ENCODE measurements at regions of chrX and their contacts with region 1.

Region 1: GRCh38 chrX:74382613-74383012 is 38.7 kb upstream of the SLC16A2 start:
- DNase-seq: peak; percentile 62
- H3K4me3 ChIP-seq: no peak overlapping the region
- H3K27ac ChIP-seq: no peak overlapping the region
- H3K4me1 ChIP-seq: no peaks in the 10 kb centered on the region
- H3K27me3 ChIP-seq: peaks cover 2% of the 10 kb centered on the region
- CTCF ChIP-seq: peak; percentile 85 to 97

Region 2: DNA sequence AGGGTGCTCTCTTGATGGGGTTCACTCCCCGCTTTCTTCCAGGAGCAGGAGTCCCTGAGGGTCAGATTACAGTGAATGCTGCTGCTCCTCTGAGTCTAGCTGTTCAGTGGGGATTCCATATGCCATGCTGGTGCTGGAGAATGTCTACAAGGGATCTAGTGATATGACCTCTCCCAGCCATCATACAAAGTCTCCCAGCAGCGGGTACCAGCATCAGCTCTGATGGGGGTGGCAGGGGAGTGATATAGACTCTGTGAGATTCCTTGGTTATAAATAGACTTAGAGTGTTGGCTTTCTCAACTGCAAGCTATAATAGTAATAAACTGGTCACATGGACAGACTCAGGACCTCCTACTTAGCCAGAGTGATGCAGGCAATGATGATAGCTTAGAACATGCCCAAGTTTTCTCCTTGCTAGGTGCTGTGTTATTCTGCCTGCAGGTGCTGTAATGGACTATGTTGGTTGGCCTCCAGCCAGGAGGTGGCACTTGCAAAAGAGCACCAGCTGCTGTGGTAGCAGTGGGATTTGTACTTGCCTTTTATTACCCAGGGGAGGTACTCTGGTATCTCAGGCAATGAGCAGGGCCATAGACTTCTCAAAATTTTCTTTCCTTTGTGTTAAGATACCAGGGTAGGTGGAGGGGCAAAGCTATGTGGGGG is 616.7 kb before region 1 on chrX:
- CTCF ChIA-PET with region 1: no interaction called
- dilution Hi-C with region 1: no loop called
- in situ Hi-C with region 1: no loop called
- intact Hi-C with region 1: no loop called
- DNase-seq: no peak
- H3K4me3 ChIP-seq: no peak overlapping the region
- H3K27ac ChIP-seq: no peak overlapping the region
- H3K4me1 ChIP-seq: no peaks in the 10 kb centered on the region
- H3K27me3 ChIP-seq: peaks cover 2% of the 10 kb centered on the region
- CTCF ChIP-seq: no peak

Region 3: GRCh38 chrX:73855546-73855945 is 527.1 kb before region 1 on chrX:
- CTCF ChIA-PET with region 1: no interaction called
- dilution Hi-C with region 1: no loop called
- in situ Hi-C with region 1: no loop called
- intact Hi-C with region 1: loop called (anchors 1 kb)
- DNase-seq: peak; percentile 60
- H3K4me3 ChIP-seq: no peak overlapping the region
- H3K27ac ChIP-seq: no peak overlapping the region
- H3K4me1 ChIP-seq: no peaks in the 10 kb centered on the region
- H3K27me3 ChIP-seq: no peaks in the 10 kb centered on the region
- CTCF ChIP-seq: peak; percentile 85 to 88

Region 4: DNA sequence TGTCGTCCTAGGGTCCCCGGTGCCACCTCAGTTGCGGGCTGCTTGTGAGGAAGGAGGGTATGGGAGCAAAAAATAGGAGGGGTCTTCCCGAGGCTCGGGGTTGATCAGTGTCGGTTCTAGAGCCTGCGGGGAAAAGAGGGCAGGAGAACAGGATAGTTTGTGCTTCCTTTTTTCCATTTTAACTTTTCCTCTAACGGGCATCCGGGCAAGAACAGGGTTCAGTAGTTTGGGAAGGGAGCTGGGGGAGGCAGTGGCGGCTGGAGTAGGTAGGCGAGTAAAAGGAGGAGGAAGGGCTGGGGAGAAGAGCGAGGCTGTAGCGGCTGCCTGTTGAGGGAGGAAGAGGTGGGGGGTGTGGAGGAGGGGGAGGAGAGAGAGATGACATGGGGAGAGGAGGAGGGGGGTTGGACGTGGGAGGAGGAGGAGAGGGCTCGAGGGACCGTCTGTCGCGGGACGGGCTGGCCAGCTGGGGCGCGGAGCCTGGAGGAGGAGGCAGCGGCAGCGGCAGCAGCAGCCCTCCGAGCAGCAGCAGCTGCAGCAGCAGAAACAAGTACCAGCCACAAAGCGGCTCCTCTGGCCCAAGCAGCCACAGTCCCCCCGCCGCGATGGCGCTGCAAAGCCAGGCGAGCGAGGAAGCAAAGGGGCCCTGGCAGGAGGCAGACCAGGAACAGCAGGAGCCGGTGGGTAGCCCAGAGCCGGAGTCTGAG is 38.6 kb after region 1 on chrX and contains the start of gene SLC16A2:
- CTCF ChIA-PET with region 1: no interaction called
- dilution Hi-C with region 1: no loop called
- in situ Hi-C with region 1: no loop called
- intact Hi-C with region 1: loop called (anchors 1 kb)
- DNase-seq: peak; percentile 64
- H3K4me3 ChIP-seq: peak within 1 kb of the TSS; percentile 52 to 63 (median 63)
- H3K27ac ChIP-seq: peak within 1 kb of the TSS; percentile 18
- H3K4me1 ChIP-seq: no peaks in the 10 kb centered on the region
- H3K27me3 ChIP-seq: no peaks in the 10 kb centered on the region
- CTCF ChIP-seq: no peak
- total RNA-seq, gene SLC16A2: 16.2 to 45.4 TPM

Region 5: GRCh38 chrX:74450803-74451449 is 68.3 kb after region 1 on chrX:
- CTCF ChIA-PET with region 1: no interaction called
- dilution Hi-C with region 1: no loop called
- in situ Hi-C with region 1: loop called in 1 of 2 experiments (anchors 10 kb)
- intact Hi-C with region 1: loop called (anchors 2 kb)
- DNase-seq: peak; percentile 90
- H3K4me3 ChIP-seq: no peak overlapping the region
- H3K27ac ChIP-seq: peak overlapping the region; percentile 84
- H3K4me1 ChIP-seq: peaks cover 51% of the 10 kb centered on the region
- H3K27me3 ChIP-seq: no peaks in the 10 kb centered on the region
- CTCF ChIP-seq: no peak

Region 6: DNA sequence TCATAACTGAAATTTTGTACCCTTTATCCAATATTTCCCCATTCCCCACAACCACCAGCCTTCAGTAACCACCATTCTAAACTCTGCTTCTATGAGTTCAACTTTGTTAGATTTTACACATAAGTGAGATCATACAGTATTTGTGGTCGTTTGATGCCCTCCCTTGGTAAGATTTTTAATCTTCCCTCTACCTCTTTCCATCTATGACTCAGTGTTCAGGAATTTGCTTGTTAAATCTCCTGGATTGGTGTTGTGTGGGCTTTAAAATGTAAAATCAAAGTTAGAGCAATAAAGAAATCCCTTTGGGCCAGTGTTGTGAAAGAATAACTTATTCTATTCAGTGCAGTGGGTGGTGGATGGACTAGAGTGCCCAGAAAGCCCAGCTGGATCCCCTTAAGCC is 76.1 kb after region 1 on chrX:
- CTCF ChIA-PET with region 1: no interaction called
- dilution Hi-C with region 1: no loop called
- in situ Hi-C with region 1: loop called in 1 of 2 experiments (anchors 10 kb)
- intact Hi-C with region 1: loop called (anchors 1 kb)
- DNase-seq: peak; percentile 67
- H3K4me3 ChIP-seq: no peak overlapping the region
- H3K27ac ChIP-seq: no peak overlapping the region
- H3K4me1 ChIP-seq: peaks cover 4% of the 10 kb centered on the region
- H3K27me3 ChIP-seq: no peaks in the 10 kb centered on the region
- CTCF ChIP-seq: peak; percentile 13 to 21

Region 7: DNA sequence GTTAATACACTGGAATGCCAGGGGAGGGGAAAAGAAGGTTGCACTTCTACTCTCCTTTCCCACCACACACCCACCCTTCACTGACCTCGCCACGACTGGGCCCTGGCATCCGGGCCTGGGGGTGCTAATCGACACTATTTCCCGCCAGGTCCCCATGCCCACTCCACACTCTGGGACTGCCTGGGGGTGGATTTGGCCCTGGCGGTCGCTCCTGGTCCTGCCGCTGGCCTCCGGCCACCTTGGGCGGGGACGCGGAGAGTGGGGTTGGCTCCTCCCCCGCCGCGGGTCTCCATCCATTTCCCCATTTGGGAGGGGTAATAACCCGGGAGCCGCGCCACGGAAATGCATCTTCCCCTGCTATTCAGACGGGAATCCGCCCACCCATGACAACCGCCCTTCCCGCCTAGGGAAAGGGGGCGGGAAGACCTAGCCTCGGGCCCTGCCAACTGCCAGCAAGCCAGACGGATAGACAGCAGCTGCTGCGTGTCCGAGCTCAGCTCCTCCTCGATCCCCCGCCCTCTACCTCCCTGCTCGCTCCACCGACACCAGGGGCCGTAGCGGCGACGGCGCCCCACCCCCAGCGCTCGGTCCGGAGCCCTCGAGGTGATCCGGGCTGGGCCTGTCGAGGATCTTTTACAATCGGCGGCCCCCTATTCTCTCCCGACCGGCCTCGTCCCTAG is 153.7 kb after region 1 on chrX:
- CTCF ChIA-PET with region 1: interaction called, 3 read pairs
- dilution Hi-C with region 1: no loop called
- in situ Hi-C with region 1: loop called (anchors 10 to 25 kb)
- intact Hi-C with region 1: loop called (anchors 1 kb)
- DNase-seq: peak; percentile 47
- H3K4me3 ChIP-seq: peak overlapping the region; percentile 27 to 42 (median 37)
- H3K27ac ChIP-seq: no peak overlapping the region
- H3K4me1 ChIP-seq: peaks cover 23% of the 10 kb centered on the region
- H3K27me3 ChIP-seq: no peaks in the 10 kb centered on the region
- CTCF ChIP-seq: peak; percentile 2 to 25

Region 8: DNA sequence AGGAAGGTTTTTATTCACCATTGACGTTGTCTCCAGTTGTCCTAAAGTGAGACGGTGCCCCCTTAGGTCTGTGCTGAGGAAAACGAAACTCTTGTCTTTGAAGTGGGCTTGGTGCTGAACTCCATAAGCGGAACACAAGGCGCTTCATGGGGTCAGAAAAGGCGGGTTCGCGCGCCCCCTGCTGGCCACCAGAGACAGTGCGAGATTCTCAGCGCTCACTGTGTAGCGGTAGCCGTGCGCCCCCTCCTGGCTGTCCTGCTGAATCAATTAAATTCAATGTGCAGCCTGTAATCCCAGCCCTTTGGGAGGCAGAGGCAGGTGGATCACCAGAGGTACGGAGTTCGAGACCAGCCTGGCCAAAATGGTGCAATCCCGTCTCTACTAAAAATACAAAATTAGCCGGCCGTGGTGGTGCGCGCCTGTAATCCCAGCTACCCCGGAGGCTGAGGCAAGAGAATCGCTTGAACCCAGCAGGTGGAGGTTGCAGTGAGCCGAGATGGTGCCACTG is 167.7 kb after region 1 on chrX:
- CTCF ChIA-PET with region 1: interaction called, 5 read pairs
- dilution Hi-C with region 1: no loop called
- in situ Hi-C with region 1: loop called (anchors 10 to 25 kb)
- intact Hi-C with region 1: loop called (anchors 1 kb)
- DNase-seq: peak; percentile 53
- H3K4me3 ChIP-seq: no peak overlapping the region
- H3K27ac ChIP-seq: no peak overlapping the region
- H3K4me1 ChIP-seq: no peaks in the 10 kb centered on the region
- H3K27me3 ChIP-seq: no peaks in the 10 kb centered on the region
- CTCF ChIP-seq: peak; percentile 96